Esophagus muscularis mucosa (tissue), 4 donors: ENCODE measurements at regions of chr20 and their contacts with region 1.

Region 1: GRCh38 chr20:50456471-50457324 is 53.5 kb upstream of the PTPN1 start:
- DNase-seq: no peak
- H3K4me3 ChIP-seq: no peak overlapping the region
- H3K27ac ChIP-seq: peak overlapping the region in 1 of 4 donors; percentile 11
- H3K4me1 ChIP-seq: peaks cover 6 to 18% (median 12%) of the 10 kb centered on the region in 4 donors
- H3K27me3 ChIP-seq: no peaks in the 10 kb centered on the region
- CTCF ChIP-seq: no peak
- EP300 ChIP-seq: no peak
- POLR2A ChIP-seq: no peak

Region 2: DNA sequence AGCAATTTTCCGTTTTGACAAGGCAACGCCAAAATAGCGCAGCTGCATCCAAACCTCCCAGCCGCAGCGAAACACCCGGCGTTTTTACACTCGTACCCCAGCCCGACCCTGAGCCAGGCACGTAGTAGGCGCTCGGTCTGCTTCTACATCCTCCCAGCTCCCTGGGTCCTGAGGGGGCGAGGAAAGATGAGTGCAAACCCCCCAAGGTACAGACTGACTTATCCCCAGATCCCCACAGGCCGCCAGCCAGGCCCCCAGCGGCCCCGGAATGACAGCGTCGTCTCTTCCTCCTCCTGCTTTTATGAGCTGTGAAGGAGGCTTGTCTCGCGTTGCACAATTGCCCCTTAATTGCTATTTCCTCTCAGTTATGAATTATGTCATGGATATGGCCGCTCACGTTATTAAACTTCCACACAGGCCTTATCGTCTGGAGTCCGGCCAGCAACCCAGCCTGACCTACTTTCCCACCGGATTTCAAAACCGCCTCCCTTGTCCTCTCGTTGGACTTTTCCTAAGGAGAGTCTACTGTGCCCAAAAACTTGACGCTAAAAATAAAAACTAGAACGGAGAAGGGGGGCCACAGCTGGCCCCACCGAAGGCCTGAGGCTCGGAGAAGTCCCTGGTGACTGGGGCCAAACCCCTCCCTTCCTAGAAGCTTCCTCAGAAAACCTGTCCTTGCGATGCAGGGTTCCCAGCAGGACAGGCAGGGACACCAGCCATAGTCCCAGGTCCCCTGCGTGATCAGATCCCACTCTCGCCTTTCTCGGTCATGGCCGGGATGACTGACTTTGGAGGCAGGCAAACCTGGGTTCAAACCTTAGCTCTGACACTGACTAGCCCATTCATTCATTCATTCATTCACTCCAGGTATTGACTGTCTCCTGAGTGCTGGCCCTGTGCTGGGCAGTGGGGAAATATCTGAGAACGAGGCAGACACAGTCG is 77.4 kb before region 1 on chr20:
- intact Hi-C with region 1: loop called (anchors 5 kb)
- DNase-seq: peak; percentile 98
- H3K4me3 ChIP-seq: peak overlapping the region; percentile 20 to 36 (median 24)
- H3K27ac ChIP-seq: peak overlapping the region; percentile 81 to 86 (median 82)
- H3K4me1 ChIP-seq: peaks cover 21 to 59% (median 42%) of the 10 kb centered on the region in 4 donors
- H3K27me3 ChIP-seq: no peaks in the 10 kb centered on the region
- CTCF ChIP-seq: no peak
- EP300 ChIP-seq: no peak
- POLR2A ChIP-seq: peak; percentile 76

Region 3: DNA sequence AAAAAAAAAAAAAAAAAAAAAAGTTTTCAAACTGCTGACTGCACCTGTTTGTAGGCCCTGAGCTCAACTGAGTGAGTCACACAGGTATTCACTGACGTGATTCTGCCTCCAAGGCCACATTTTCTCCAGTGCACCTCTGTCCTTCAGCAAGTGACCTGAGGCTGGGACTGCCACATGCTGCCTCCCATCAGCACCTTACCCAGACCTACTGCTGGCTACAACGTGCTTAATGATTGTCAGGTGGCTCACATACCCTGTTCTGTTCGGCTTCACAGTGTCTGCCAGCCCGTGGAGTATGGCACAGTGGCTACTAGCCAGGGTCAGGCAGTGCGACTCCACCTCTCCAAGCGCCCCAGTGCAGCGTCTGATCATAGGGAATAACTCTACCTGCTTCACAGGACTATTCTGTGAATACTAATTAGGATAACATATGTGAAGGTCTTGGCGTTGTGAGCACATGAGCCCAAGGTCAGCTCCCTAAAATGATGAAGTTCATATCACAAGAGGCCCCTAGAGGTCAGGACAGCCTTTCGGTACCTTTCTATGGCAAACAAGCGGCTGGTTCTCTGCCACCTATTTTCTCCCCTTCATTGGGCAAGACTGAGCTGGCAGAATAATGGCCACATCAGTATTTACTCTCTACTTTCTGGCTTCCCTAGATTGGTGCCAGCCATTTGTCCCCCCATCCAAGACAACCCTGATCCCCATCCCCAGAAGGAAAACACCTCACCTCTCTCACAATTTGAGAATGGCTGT is 206.6 kb after region 1 on chr20:
- intact Hi-C with region 1: no loop called
- DNase-seq: no peak
- H3K4me3 ChIP-seq: no peak overlapping the region
- H3K27ac ChIP-seq: peak overlapping the region in 2 of 4 donors; percentile 66 to 73
- H3K4me1 ChIP-seq: peaks cover 18 to 47% (median 37%) of the 10 kb centered on the region in 4 donors
- H3K27me3 ChIP-seq: no peaks in the 10 kb centered on the region
- CTCF ChIP-seq: no peak
- EP300 ChIP-seq: no peak
- POLR2A ChIP-seq: no peak